H1 (cell line): ENCODE measurements at regions of chr11 and their contacts with region 1.

Region 1: GRCh38 chr11:116732271-116733042 is 40.3 kb downstream of the BUD13 start:
- DNase-seq: peak; percentile 62 to 87
- H3K4me3 ChIP-seq: peak overlapping the region; percentile 2 to 51 (median 15); a peak in 5 of 8 replicates
- H3K27ac ChIP-seq: no peak overlapping the region
- H3K4me1 ChIP-seq: peaks cover 6 to 23% (median 16%) of the 10 kb centered on the region in 4 experiments
- H3K27me3 ChIP-seq: no peaks in the 10 kb centered on the region
- CTCF ChIP-seq: peak; percentile 84 to 98 (median 97)
- EP300 ChIP-seq: no peak
- POLR2A ChIP-seq: no peak
- RAD21 ChIP-seq: peak; percentile 74 to 76

Region 2: DNA sequence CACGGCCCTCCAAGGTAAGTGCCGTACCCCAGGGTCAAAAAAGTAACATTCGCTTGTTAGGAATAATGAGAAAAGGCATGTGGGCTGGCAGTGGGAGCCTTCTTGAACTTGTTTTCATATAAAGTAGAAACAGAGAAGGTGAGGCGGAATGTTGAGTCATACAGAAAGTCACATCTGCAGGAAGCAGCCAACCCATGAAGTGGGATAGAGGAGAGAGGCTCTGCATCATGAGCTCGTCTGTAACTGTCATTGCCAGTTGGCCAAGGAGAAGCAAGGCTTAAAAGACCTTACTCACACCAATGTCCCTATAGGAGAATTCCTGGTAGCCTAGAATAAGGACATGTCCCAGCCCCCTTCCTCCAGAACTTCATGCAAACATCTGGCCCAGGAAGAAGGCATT is 213.0 kb before region 1 on chr11:
- CTCF ChIA-PET with region 1: interaction called, 17 read pairs
- POLR2A ChIA-PET with region 1: no interaction called
- DNase-seq: no peak
- H3K4me3 ChIP-seq: no peak overlapping the region
- H3K27ac ChIP-seq: no peak overlapping the region
- H3K4me1 ChIP-seq: no peaks in the 10 kb centered on the region
- H3K27me3 ChIP-seq: no peaks in the 10 kb centered on the region
- CTCF ChIP-seq: no peak
- EP300 ChIP-seq: no peak
- POLR2A ChIP-seq: no peak
- RAD21 ChIP-seq: no peak

Region 3: DNA sequence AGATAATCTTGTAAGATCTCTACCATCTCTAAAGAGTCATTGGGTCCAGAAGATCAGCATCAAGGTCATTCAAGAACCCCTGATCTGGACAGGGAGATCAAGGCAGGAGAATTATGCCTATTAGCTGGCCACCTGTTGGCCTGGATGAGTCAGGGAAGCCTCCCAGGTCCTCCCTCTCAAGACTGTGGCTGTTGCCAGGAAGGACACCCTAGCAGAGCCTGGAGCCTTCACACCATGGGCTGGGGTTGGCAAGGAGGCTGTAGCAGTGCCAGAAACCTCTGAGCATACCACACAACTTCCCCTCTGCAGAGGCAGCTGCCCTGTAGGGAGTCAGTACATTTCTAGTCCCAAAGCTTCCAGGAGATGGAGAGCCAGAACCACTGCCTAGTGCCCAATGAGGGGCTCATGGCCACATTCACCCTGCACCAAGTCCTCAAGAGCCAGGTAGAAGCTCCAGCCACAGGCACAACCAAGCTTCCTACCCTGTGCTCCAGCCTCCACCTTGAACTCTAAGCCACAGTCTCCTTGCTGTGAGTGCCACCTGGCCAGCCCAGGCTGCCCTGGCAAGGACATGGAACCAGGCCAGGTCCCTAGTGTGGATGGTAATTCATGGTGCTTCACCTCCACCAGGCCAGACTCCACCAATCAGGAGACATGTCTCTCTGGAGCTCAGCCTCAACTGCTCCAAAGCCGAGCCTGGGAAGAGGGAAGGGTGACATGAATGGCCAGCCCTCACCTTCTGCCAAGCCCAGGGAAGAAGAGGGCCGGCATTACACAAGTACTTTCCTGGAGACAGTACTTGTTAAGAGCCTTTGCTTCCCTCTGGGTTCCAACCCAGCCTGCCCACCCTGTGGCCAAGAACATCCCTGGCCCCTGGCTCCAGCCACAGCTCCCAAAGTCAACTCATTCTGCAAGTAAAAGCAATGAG is 83.9 kb before region 1 on chr11:
- CTCF ChIA-PET with region 1: interaction called, 22 read pairs
- POLR2A ChIA-PET with region 1: no interaction called
- DNase-seq: no peak
- H3K4me3 ChIP-seq: no peak overlapping the region
- H3K27ac ChIP-seq: no peak overlapping the region
- H3K4me1 ChIP-seq: peaks cover 2 to 7% (median 4%) of the 10 kb centered on the region in 4 experiments; a peak in 4 of 7 replicates
- H3K27me3 ChIP-seq: no peaks in the 10 kb centered on the region
- CTCF ChIP-seq: no peak
- EP300 ChIP-seq: no peak
- POLR2A ChIP-seq: no peak
- RAD21 ChIP-seq: no peak

Region 4: DNA sequence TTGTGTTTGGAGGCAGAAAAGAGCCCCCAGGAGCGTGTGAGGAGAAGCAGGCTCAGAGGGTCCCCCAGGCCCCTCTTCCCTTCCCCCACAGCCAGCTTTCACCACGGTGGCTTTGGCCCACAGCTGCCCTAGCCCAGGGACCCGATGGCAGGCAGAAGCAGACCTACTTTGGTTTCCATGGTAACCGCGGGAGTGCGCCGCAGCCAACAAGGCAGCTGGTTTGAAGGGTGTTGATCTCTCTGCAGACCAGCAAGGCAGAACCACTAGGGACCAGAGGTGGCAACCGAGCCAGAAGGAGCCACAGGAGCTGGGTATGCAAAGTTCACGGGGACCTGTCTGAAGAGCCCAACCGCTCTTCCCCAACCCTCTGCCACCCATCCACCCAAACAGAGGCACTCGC is 29.0 kb before region 1 on chr11:
- CTCF ChIA-PET with region 1: interaction called, 334 read pairs
- POLR2A ChIA-PET with region 1: interaction called, 3 read pairs
- DNase-seq: peak in 1 of 2 experiments; percentile 76
- H3K4me3 ChIP-seq: no peak overlapping the region
- H3K27ac ChIP-seq: no peak overlapping the region; the same call in 1 of the 2 replicates
- H3K4me1 ChIP-seq: peaks cover 0 to 13% (median 7%) of the 10 kb centered on the region in 4 experiments; a peak in 5 of 7 replicates
- H3K27me3 ChIP-seq: peaks cover 0 to 15% (median 8%) of the 10 kb centered on the region in 4 experiments; a peak in 4 of 7 replicates
- CTCF ChIP-seq: peak in 1 of 3 experiments; percentile 7; a peak in 1 of 4 replicates
- EP300 ChIP-seq: no peak
- POLR2A ChIP-seq: no peak
- RAD21 ChIP-seq: no peak

Region 5: DNA sequence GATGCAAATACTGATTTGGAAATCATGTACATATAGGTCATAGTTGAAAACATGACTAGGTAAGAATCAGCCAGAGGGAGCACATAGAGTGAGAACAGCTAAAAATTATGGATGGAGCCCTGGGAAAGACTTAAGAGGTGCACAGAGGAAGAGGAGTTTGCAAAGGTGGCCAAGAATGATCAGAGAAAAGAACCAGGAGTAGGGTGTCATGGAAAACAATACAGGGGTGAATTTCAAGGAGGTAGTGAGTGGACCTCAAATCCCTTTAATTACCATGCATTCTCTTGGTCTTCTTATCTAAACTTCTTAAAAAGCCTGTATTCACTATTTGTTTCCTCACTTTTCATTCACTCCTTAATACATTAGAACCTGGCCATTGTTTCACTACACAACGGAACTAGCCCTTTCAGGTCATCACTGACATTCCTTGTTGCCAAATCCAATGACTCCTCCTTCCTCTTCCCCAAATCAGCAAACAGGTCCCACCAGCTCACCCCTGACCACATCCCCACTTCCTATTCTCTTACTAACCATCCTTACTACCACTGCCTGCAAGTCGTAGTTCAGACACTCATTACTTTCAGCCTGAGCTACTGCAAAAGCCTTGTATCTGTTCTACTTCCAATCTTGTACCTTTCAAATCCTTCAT is 17.7 kb after region 1 on chr11:
- CTCF ChIA-PET with region 1: interaction called, 52 read pairs
- POLR2A ChIA-PET with region 1: interaction called, 3 read pairs
- DNase-seq: no peak
- H3K4me3 ChIP-seq: no peak overlapping the region
- H3K27ac ChIP-seq: no peak overlapping the region
- H3K4me1 ChIP-seq: no peaks in the 10 kb centered on the region
- H3K27me3 ChIP-seq: no peaks in the 10 kb centered on the region
- CTCF ChIP-seq: no peak
- EP300 ChIP-seq: no peak
- POLR2A ChIP-seq: no peak
- RAD21 ChIP-seq: no peak